ENCODE measurements at regions of chrX and their contacts with region 1.

Region 1: GRCh38 chrX:108091266-108091877 is at the starts of genes ATG4A and PSMD10:
- DNase-seq: peak; percentile 94
- H3K4me3 Mint-ChIP-seq: no peak within 1 kb of the TSS
- H3K27ac Mint-ChIP-seq: no peak within 1 kb of the TSS
- H3K4me1 Mint-ChIP-seq: peaks cover 9% of the 10 kb centered on the region
- H3K27me3 Mint-ChIP-seq: no peaks in the 10 kb centered on the region
- total RNA-seq, gene ATG4A: 8.7 to 9.7 TPM
- total RNA-seq, gene PSMD10: 52.6 to 63.5 TPM

Region 2: GRCh38 chrX:107118322-107119147 is 972.8 kb before region 1 on chrX and contains the start of gene RBM41:
- CTCF ChIA-PET with region 1: no interaction called
- POLR2A ChIA-PET with region 1: no interaction called
- intact Hi-C with region 1: loop called (anchors 2 kb)
- DNase-seq: peak; percentile 81
- H3K4me3 Mint-ChIP-seq: peak within 1 kb of the TSS; percentile 96
- H3K27ac Mint-ChIP-seq: peak within 1 kb of the TSS; percentile 93
- H3K4me1 Mint-ChIP-seq: peaks cover 32% of the 10 kb centered on the region
- H3K27me3 Mint-ChIP-seq: no peaks in the 10 kb centered on the region
- total RNA-seq, gene RBM41: 9.5 to 11.4 TPM

Region 3: GRCh38 chrX:107710617-107711391 is 380.6 kb before region 1 on chrX:
- CTCF ChIA-PET with region 1: no interaction called
- POLR2A ChIA-PET with region 1: no interaction called
- intact Hi-C with region 1: loop called (anchors 1 kb)
- DNase-seq: peak; percentile 59
- H3K4me3 Mint-ChIP-seq: peak overlapping the region; percentile 62
- H3K27ac Mint-ChIP-seq: peak overlapping the region; percentile 91
- H3K4me1 Mint-ChIP-seq: peaks cover 59% of the 10 kb centered on the region
- H3K27me3 Mint-ChIP-seq: no peaks in the 10 kb centered on the region

Region 4: DNA sequence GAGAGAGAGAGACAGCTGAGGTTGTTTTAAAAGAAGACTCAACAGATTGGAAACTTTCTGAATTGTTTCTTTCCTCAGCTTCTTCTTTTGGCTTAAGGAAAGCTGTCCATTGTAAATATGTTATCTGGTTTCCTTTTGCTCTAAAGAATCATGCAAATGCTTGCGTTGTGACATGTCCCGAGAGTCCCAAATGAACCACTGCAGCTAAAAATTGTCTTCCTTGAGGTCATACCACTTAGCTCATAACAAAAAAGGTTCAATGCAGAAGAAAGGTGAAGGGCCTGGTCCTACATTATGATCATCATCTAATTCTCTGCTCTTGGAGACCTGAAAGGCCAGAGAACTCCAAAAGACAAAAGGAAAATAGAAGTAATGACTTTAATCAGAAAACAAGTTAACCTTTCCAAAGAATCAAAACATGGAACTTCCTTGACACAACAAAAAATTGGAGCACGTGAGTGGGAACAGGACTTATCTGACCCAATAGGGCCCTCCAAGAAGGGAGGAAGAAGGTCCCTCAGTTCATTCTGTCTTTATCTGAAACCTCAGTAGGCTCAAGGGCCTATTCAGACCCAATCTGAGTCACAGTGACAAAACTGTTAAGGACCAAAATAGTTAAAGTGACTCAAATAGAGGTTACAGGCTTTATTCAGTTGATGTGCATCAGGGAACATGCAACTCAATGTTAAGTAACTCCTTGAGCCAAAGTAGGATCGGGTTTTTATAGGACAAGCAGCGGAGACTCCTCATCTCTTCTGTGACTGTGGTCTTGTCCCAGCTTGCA is 61.3 kb before region 1 on chrX:
- CTCF ChIA-PET with region 1: no interaction called
- POLR2A ChIA-PET with region 1: no interaction called
- intact Hi-C with region 1: loop called (anchors 2 kb)
- DNase-seq: no peak
- H3K4me3 Mint-ChIP-seq: no peak overlapping the region
- H3K27ac Mint-ChIP-seq: peak overlapping the region; percentile 40
- H3K4me1 Mint-ChIP-seq: peaks cover 68% of the 10 kb centered on the region
- H3K27me3 Mint-ChIP-seq: no peaks in the 10 kb centered on the region

Measured in activated CD4-positive, alpha-beta memory T cell treated with anti-CD3 and anti-CD28 coated beads for 36 hours (primary cell).